ENCODE measurements at regions of chr17 and their contacts with region 1.

Region 1: DNA sequence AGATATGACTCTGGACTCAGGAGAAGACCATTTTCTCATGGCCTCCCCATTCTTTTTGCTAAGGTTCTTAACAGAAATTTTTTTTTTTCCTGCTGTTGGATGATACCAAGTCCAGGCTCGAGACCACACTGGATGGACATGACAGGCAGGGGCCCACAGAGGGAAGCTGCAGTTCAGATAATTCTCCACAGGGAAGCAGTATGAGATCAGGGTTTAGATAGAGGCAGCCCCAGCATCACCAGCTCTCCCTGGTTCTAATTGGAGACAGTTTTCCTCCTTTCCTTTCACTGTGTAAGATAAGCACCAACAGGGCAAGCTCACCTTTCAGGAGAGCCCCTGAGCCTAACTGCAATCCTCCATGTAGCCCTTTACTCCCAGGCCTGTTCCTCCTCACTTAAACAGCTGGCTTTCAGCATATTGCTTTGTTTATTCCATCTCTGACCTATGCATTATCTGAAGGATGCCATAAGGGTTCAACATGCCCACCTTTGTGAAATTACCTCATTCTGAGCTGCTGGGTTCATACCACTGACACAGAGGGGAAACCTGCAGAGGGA is 108.1 kb downstream of the SNX11 start:
- DNase-seq: peak; percentile 75 to 80
- ATAC-seq: peak; percentile 97 to 99
- H3K4me3 ChIP-seq: no peak overlapping the region
- H3K27ac ChIP-seq: peak overlapping the region in 1 of 2 experiments; percentile 2; a peak in 1 of 6 replicates
- H3K4me1 ChIP-seq: no peaks in the 10 kb centered on the region
- CTCF ChIP-seq: peak; percentile 85
- EP300 ChIP-seq: no peak
- POLR2A ChIP-seq: no peak
- RAD21 ChIP-seq: peak; percentile 94 to 98

Region 2: DNA sequence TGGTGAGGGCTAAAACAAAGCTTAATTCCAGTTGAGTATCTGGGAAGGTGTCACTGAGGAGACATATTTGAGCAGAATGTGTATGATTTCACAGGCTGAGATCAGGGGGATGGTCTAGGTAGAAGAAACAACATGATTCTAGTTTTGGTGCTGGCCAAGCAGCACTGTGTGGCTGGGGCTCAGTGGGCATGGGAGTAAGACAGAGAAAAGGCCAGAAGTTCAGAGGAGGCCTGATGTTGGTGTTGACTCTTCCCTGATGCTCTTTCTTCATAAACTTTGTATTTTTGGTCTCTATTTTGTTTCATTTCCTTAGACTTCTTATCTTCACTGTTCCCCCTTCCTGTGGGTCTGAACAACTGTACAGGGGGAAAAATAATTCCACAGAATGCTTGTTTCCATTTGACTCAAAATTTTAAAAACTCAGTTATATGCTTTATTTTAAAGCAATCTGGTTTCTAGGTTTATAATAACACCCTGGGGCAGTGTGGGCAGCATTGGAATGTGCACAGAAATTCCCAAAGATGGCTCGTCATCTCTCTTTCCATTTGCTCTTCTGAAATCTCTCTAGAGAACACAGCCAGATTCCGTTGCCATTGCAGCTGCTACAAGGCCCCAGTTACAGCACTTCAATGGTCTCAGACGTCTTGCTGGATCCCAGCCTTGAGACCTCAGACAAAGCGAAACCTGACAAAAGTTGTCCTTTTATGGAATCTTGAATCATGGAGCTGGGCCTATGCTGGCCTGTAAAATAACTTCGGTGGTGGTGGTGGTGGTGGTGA is 39.8 kb before region 1 on chr17:
- CTCF ChIA-PET with region 1: interaction called, 16 read pairs
- POLR2A ChIA-PET with region 1: no interaction called
- DNase-seq: no peak
- ATAC-seq: no peak
- H3K4me3 ChIP-seq: no peak overlapping the region
- H3K27ac ChIP-seq: no peak overlapping the region
- H3K4me1 ChIP-seq: peaks cover 5% of the 10 kb centered on the region; the same call in 1 of the 3 replicates
- CTCF ChIP-seq: no peak
- EP300 ChIP-seq: no peak
- POLR2A ChIP-seq: no peak
- RAD21 ChIP-seq: no peak

Region 3: GRCh38 chr17:48228721-48229120 is 13.1 kb after region 1 on chr17:
- CTCF ChIA-PET with region 1: interaction called, 47 read pairs
- POLR2A ChIA-PET with region 1: interaction called, 3 read pairs
- DNase-seq: no peak
- ATAC-seq: peak; percentile 70 to 74; a peak in 5 of 6 replicates
- H3K4me3 ChIP-seq: no peak overlapping the region
- H3K27ac ChIP-seq: no peak overlapping the region
- H3K4me1 ChIP-seq: no peaks in the 10 kb centered on the region
- CTCF ChIP-seq: no peak
- EP300 ChIP-seq: no peak
- POLR2A ChIP-seq: no peak
- RAD21 ChIP-seq: no peak

Region 4: DNA sequence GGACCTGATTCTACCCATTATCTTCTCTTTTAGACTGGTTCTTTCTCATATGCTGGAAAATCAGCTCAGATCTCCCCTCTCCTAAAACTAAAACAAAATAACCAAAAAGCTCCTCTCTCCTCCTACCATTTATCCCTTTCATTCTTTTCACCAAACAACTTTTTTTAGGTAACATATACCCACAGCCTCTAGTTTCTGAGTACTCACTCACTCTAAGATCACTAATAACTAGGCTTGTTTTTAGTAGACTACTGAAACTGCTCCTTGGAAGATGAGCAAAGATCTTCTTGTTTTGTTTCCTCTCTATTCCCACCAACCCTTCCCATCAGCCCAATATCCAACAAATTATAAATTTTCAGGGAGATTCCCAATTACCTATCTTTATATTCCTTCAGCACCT is 85.3 kb after region 1 on chr17:
- CTCF ChIA-PET with region 1: interaction called, 10 read pairs
- POLR2A ChIA-PET with region 1: no interaction called
- DNase-seq: no peak
- ATAC-seq: no peak
- H3K4me3 ChIP-seq: no peak overlapping the region
- H3K27ac ChIP-seq: no peak overlapping the region
- H3K4me1 ChIP-seq: peaks cover 9% of the 10 kb centered on the region
- CTCF ChIP-seq: no peak
- EP300 ChIP-seq: no peak
- POLR2A ChIP-seq: no peak
- RAD21 ChIP-seq: no peak

Region 5: DNA sequence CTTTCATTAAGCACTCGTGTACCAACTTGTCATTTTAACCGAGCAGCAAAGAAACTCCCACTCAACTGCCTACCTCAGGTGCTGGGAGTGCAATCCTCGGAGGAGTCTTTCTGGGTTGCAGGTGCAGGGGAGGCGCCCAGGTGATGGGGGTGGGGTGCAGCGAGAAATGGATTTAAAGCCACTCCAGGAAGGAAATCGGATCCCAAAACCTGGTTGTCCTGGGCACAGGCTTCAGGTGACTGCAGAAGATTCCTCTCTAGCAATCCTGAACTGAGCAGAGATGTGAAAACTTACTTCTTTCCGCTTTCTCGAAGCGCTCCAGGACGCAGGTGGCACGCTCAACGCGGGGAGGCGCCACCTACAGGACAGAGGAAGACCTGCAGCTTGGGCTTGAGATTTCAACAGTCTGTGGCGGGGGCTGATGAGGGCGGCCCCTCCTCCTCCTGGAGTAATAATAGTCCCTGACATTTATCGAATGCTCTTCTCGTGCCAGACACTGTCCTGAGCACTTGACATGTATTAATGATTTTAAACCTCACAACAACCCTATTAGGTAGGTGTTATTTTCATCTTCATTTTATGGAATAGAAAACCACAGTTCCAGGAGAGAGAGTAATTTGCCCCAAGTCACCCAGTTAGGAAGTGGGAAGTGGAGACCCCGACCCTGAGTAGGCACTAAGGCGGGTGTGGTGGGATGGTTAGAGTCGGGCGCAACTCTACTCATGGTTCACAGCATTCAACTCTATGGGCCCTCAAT is 241.6 kb after region 1 on chr17:
- CTCF ChIA-PET with region 1: interaction called, 12 read pairs
- POLR2A ChIA-PET with region 1: no interaction called
- DNase-seq: peak; percentile 69 to 75
- ATAC-seq: peak; percentile 84 to 97
- H3K4me3 ChIP-seq: peak overlapping the region; percentile 30; the same call in 2 of the 3 replicates
- H3K27ac ChIP-seq: no peak overlapping the region
- H3K4me1 ChIP-seq: peaks cover 8% of the 10 kb centered on the region; the same call in 2 of the 3 replicates
- CTCF ChIP-seq: peak; percentile 97
- EP300 ChIP-seq: no peak
- POLR2A ChIP-seq: no peak
- RAD21 ChIP-seq: peak; percentile 69 to 75

Region 6: GRCh38 chr17:48618256-48618897 is 402.7 kb after region 1 on chr17:
- CTCF ChIA-PET with region 1: interaction called, 19 read pairs
- POLR2A ChIA-PET with region 1: interaction called, 6 read pairs
- DNase-seq: peak; percentile 86 to 97
- ATAC-seq: peak; percentile 74 to 78
- H3K4me3 ChIP-seq: no peak overlapping the region
- H3K27ac ChIP-seq: no peak overlapping the region
- H3K4me1 ChIP-seq: peaks cover 12% of the 10 kb centered on the region
- CTCF ChIP-seq: peak; percentile 99
- EP300 ChIP-seq: no peak
- POLR2A ChIP-seq: no peak
- RAD21 ChIP-seq: peak; percentile 97 to 99